ENCODE measurements at regions of chr7 and their contacts with region 1.

Region 1: DNA sequence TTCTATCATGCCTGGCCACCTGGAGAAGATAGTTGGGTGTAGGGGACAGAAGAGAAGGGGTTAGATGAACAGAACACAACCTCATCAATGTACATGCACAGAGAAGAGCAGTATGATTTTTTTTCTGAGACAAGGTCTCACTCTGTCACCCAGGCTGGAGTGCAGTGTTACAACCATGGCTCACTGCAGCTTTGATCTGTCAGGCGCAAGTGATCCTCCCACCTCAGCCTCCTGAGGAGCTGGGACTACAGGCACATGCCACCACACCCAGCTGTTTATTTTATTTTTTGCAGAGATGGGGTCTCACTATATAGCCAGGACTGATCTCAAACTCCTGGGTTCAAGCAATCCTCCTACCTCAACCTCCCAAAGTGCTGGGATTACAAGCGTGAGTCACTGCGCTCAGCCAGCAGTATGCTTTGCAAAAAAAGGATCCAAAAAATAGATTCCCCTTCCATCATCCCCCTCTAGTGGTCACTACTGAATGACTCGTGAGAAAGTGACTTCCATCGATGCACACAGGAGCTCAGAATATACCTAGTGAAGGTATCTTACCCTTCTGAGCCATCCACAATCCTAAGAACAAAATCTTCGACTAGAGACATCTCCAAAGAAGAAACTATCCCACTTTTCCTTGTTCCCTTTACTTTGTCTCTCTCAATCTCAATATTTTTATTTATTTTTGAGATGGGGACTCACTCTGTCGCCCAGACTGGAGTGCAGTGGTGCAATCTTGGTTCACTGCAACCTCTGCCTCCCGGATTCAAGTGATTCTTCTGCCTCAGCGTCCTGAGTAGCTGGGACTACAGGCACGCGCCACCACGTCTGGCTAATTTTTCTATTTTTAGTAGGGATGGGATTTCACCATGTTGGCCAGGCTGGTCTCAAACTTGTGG is 21.0 kb downstream of the ZCWPW1 start:
- DNase-seq: peak; percentile 45
- H3K4me3 Mint-ChIP-seq: no peak overlapping the region
- H3K27ac Mint-ChIP-seq: no peak overlapping the region
- H3K4me1 Mint-ChIP-seq: no peaks in the 10 kb centered on the region
- H3K27me3 Mint-ChIP-seq: peaks cover 24% of the 10 kb centered on the region

Region 2: DNA sequence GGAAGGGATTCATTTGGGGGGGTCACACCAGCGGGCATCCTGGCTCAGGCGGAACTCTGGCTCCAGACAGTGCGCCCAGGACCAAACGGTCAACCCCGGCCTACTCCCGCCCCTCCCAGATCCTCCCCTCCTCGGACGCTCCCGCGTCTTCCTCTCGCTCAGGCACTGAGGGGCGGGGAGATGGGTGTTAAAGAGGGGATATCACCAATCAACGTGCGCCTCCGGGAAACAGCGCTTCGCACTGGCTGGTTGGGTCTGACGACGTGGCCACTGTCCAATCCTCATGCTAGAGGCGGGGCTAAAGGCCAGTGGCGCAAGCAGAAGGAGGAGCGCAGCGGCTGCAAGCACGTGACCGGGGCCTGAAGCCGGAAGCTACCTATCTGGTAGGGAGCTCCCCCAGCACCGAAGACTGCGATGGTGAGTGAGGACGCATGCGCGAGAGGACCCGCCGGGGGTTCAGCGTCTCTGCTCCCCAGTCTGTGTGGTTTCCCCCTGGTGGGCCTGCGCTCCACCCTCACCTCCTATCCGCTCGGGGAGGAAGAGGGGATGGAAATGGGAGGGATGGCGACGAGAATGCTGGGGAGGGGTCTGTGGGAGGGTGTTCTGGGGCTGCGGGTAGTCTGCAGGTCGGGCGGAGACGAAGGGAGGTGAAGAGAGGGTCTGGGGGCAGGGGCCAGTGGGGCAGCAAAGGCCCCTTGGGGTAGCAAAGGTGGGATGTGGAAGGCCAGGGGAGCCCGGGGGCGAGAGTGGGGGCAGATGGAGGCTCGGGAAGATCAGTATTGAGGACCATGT is 258.8 kb before region 1 on chr7 and contains the start of gene LAMTOR4:
- intact Hi-C with region 1: no loop called
- DNase-seq: peak; percentile 99
- H3K4me3 Mint-ChIP-seq: peak within 1 kb of the TSS; percentile 97
- H3K27ac Mint-ChIP-seq: peak within 1 kb of the TSS; percentile 94
- H3K4me1 Mint-ChIP-seq: peaks cover 24% of the 10 kb centered on the region
- H3K27me3 Mint-ChIP-seq: no peaks in the 10 kb centered on the region
- total RNA-seq, gene LAMTOR4: 119 and 133 TPM in 2 replicates

Region 3: GRCh38 chr7:100342765-100343164 is 64.8 kb before region 1 on chr7:
- intact Hi-C with region 1: loop called (anchors 2 kb)
- DNase-seq: no peak
- H3K4me3 Mint-ChIP-seq: no peak overlapping the region
- H3K27ac Mint-ChIP-seq: no peak overlapping the region
- H3K4me1 Mint-ChIP-seq: peaks cover 39% of the 10 kb centered on the region
- H3K27me3 Mint-ChIP-seq: no peaks in the 10 kb centered on the region

Region 4: DNA sequence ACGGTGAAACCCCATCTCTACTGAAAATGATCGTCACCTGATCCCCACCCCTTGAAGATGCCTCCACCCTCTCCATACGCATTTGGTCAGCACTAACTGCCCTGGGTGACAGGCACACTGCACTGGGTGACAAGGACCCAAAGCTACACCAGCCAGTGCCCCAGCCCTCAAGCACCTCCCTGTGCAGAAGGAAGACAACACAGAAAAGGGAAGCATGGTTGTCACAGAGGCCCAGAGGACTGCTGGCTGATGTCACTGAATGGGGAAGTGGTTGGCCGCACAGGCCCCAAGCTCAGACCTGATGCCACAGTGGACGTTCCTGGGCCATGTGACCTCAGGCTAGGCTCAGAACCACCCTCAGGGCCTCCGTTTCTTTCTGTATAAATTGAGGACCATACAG is 38.4 kb before region 1 on chr7:
- intact Hi-C with region 1: loop called (anchors 1 kb)
- DNase-seq: no peak
- H3K4me3 Mint-ChIP-seq: no peak overlapping the region
- H3K27ac Mint-ChIP-seq: peak overlapping the region; percentile 40
- H3K4me1 Mint-ChIP-seq: peaks cover 44% of the 10 kb centered on the region
- H3K27me3 Mint-ChIP-seq: no peaks in the 10 kb centered on the region

Region 5: GRCh38 chr7:100588438-100588837 is 180.9 kb after region 1 on chr7:
- intact Hi-C with region 1: no loop called
- DNase-seq: no peak
- H3K4me3 Mint-ChIP-seq: peak overlapping the region; percentile 70
- H3K27ac Mint-ChIP-seq: no peak overlapping the region
- H3K4me1 Mint-ChIP-seq: peaks cover 19% of the 10 kb centered on the region
- H3K27me3 Mint-ChIP-seq: peaks cover 3% of the 10 kb centered on the region

Region 6: DNA sequence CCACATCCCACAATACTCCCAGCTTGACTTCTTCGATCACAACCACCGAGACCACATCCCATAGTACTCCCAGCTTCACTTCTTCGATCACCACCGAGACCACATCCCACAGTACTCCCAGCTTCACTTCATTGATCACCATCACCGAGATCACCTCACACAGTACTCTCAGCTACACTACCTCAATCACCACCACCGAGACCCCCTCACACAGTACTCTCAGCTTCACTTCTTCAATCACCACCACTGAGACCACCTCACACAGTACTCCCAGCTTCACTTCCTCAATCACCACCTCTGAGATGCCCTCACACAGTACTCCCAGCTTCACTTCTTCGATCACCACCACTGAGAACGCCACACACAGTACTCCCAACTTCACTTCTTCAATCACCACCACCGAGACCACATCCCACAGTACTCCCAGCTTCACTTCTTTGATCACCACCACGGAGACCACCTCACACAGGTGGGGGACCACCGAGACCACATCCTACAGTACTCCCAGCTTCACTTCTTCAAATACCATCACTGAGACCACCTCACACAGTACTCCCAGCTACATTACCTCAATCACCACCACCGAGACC is 550.4 kb after region 1 on chr7:
- intact Hi-C with region 1: no loop called
- DNase-seq: no peak
- H3K4me3 Mint-ChIP-seq: no peak overlapping the region
- H3K27ac Mint-ChIP-seq: no peak overlapping the region
- H3K4me1 Mint-ChIP-seq: no peaks in the 10 kb centered on the region
- H3K27me3 Mint-ChIP-seq: peaks cover 4% of the 10 kb centered on the region

Region 7: DNA sequence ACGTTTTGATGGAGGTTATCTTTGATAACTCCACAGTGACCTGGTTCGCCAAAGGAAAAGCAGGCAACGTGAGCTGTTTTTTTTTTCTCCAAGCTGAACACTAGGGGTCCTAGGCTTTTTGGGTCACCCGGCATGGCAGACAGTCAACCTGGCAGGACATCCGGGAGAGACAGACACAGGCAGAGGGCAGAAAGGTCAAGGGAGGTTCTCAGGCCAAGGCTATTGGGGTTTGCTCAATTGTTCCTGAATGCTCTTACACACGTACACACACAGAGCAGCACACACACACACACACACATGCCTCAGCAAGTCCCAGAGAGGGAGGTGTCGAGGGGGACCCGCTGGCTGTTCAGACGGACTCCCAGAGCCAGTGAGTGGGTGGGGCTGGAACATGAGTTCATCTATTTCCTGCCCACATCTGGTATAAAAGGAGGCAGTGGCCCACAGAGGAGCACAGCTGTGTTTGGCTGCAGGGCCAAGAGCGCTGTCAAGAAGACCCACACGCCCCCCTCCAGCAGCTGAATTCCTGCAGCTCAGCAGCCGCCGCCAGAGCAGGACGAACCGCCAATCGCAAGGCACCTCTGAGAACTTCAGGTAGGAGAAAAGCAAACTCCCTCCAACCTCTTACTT is 719.2 kb after region 1 on chr7 and contains the start of gene SERPINE1:
- intact Hi-C with region 1: no loop called
- DNase-seq: peak; percentile 47
- H3K4me3 Mint-ChIP-seq: peak within 1 kb of the TSS; percentile 62
- H3K27ac Mint-ChIP-seq: peak within 1 kb of the TSS; percentile 58
- H3K4me1 Mint-ChIP-seq: peaks cover 44% of the 10 kb centered on the region
- H3K27me3 Mint-ChIP-seq: peaks cover 48% of the 10 kb centered on the region
- total RNA-seq, gene SERPINE1: 0.36 and 0.47 TPM in 2 replicates